Mammary epithelial cell (primary cell): ENCODE measurements at regions of chr13 and their contacts with region 1.

Region 1: GRCh38 chr13:68124437-68125086 is 894.4 kb upstream of the PCDH9 start:
- DNase-seq: peak; percentile 25
- H3K4me3 ChIP-seq: peak overlapping the region in 1 of 3 experiments; percentile 54
- H3K27ac ChIP-seq: peak overlapping the region; percentile 95
- H3K4me1 ChIP-seq: peaks cover 13% of the 10 kb centered on the region
- H3K27me3 ChIP-seq: no peaks in the 10 kb centered on the region
- CTCF ChIP-seq: no peak

Region 2: GRCh38 chr13:68160466-68160865 is 35.9 kb after region 1 on chr13:
- CTCF ChIA-PET with region 1: no interaction called
- dilution Hi-C with region 1: no loop called
- in situ Hi-C with region 1: no loop called
- intact Hi-C with region 1: no loop called
- DNase-seq: no peak
- H3K4me3 ChIP-seq: no peak overlapping the region
- H3K27ac ChIP-seq: no peak overlapping the region
- H3K4me1 ChIP-seq: no peaks in the 10 kb centered on the region
- H3K27me3 ChIP-seq: no peaks in the 10 kb centered on the region
- CTCF ChIP-seq: no peak

Region 3: DNA sequence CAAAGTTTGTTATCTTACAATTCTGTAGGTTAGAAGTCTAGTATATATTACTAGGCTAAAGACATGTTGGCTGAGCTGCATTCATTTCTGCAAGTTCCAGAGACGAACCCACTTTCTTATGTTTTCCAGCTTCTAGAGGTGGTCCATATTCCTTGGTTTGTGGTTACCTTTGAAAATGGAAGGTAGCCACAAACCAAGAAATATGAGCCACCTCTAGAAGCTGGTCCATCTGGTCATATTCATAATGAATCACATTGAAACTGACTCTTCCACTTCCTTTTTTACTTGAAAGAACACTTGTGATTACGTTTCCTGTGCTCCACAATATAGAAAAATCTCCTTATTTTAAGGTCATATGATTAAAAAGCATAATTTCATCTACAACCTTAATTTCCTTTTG is 48.5 kb after region 1 on chr13:
- CTCF ChIA-PET with region 1: no interaction called
- dilution Hi-C with region 1: no loop called
- in situ Hi-C with region 1: no loop called
- intact Hi-C with region 1: no loop called
- DNase-seq: peak; percentile 54
- H3K4me3 ChIP-seq: no peak overlapping the region
- H3K27ac ChIP-seq: peak overlapping the region; percentile 54
- H3K4me1 ChIP-seq: peaks cover 24% of the 10 kb centered on the region
- H3K27me3 ChIP-seq: no peaks in the 10 kb centered on the region
- CTCF ChIP-seq: no peak

Region 4: DNA sequence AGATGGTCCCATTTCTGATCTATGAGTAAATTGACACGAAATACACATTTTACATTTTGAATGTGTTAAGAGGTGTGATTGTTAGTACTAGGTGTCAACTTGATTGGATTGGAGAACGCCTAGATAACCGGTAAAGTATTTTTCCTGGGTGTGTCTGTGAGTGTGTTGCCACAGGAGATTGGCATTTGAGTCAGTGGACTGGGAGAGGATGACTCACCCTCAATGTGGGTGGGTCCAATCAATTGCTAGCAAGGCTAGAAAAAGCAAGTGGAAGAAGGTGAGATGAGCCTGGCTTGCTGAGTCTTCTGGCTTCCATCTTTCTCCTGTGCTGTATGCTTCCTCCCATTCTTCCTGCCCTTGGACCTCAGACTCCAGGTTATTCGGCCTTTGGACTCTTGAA is 66.3 kb after region 1 on chr13:
- CTCF ChIA-PET with region 1: interaction called, 5 read pairs
- dilution Hi-C with region 1: loop called (anchors 5 kb)
- in situ Hi-C with region 1: no loop called
- intact Hi-C with region 1: no loop called
- DNase-seq: peak; percentile 78
- H3K4me3 ChIP-seq: no peak overlapping the region
- H3K27ac ChIP-seq: peak overlapping the region; percentile 61
- H3K4me1 ChIP-seq: peaks cover 15% of the 10 kb centered on the region
- H3K27me3 ChIP-seq: no peaks in the 10 kb centered on the region
- CTCF ChIP-seq: no peak